Keratinocyte (primary cell): ENCODE measurements at regions of chr10 and their contacts with region 1.

Region 1: DNA sequence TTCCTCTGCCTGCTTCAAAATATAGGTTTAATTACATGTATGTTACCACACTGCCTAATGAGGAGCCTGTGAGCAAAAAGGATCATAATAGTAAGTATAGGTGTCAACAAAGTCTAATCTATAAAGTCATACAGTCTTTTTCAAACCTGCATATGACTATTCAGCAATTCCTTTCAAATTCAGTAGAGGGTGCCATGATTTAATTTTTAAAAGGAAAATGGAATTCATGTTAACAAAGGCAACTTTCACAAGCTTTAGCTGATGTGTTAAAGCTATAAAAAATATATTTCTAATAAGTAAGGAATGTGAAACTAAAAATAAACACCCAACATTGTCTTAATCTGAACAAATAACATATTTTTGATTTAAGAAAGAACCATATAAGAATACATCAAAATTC is 52.1 kb downstream of the MPP7 start:
- DNase-seq: no peak
- H3K4me3 ChIP-seq: no peak overlapping the region
- H3K27ac ChIP-seq: no peak overlapping the region
- H3K4me1 ChIP-seq: peaks cover 33% of the 10 kb centered on the region
- H3K27me3 ChIP-seq: no peaks in the 10 kb centered on the region
- CTCF ChIP-seq: peak in 2 of 3 experiments; percentile 14 to 40

Region 2: DNA sequence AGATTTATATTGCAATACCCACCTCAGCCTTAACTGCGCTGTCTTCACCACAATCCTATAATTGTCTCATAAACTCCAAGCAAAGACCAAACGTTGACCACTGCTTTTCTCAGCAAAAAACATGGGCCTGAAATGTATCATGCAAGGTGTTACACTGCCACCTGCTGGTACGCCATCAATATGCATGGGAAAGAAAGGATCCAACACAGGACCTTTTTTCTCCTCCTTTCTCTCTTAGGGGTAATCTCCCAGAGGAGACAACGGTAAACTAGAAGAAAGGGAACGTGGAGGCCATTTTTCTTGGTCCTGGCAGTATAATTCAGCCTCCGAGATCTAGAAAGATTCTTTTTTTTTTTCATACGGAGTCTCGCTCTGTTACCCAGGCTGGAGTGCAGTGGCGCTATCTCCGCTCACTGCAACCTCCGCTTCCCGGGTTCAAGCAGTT is 131.1 kb after region 1 on chr10:
- dilution Hi-C with region 1: loop called (anchors 25 kb)
- DNase-seq: peak; percentile 54
- H3K4me3 ChIP-seq: no peak overlapping the region
- H3K27ac ChIP-seq: no peak overlapping the region
- H3K4me1 ChIP-seq: peaks cover 2% of the 10 kb centered on the region
- H3K27me3 ChIP-seq: no peaks in the 10 kb centered on the region
- CTCF ChIP-seq: peak; percentile 85 to 93 (median 87)

Region 3: GRCh38 chr10:28652696-28653095 is 401.9 kb after region 1 on chr10:
- dilution Hi-C with region 1: no loop called
- DNase-seq: no peak
- H3K4me3 ChIP-seq: no peak overlapping the region
- H3K27ac ChIP-seq: no peak overlapping the region
- H3K4me1 ChIP-seq: no peaks in the 10 kb centered on the region
- H3K27me3 ChIP-seq: no peaks in the 10 kb centered on the region
- CTCF ChIP-seq: no peak